ENCODE measurements at regions of chr2 and their contacts with region 1.

Region 1: DNA sequence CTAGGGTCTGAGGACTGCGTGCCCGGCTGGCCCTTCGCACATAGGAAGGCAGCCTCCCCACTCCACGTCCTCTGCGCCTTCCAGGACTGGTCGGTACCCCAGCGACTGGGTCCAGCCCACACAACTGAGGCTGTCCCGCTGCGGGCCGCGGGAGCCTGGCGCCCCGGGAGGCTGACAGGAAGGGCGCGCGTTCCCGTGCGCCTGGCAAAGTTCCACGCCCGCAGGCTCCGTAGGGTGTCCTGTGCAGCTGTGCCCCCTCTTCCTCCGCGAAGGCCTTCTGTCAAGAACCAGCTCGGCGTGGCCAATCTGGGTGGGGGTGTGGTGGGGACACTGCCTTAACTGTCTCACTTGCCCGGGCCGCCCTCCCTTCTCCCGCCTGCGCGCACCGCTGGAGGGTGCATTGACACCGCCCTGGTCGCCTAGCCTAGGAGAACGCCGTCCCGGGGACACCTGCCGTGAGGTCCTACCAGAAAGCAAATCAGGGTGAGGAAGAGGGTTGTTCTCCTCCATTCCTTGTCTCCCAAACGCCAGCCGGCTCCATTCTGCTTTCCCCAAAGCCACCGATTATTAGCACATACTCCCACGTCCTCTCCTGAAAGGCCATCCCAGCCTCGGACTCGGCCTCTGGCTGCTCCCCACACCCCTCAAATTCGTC is 618 bp upstream of the LYPD1 start:
- DNase-seq: peak; percentile 78
- H3K4me3 Mint-ChIP-seq: peak overlapping the region; percentile 85
- H3K27ac Mint-ChIP-seq: peak overlapping the region; percentile 57
- H3K4me1 Mint-ChIP-seq: peaks cover 8% of the 10 kb centered on the region
- H3K27me3 Mint-ChIP-seq: no peaks in the 10 kb centered on the region
- CTCF ChIP-seq: no peak

Region 2: DNA sequence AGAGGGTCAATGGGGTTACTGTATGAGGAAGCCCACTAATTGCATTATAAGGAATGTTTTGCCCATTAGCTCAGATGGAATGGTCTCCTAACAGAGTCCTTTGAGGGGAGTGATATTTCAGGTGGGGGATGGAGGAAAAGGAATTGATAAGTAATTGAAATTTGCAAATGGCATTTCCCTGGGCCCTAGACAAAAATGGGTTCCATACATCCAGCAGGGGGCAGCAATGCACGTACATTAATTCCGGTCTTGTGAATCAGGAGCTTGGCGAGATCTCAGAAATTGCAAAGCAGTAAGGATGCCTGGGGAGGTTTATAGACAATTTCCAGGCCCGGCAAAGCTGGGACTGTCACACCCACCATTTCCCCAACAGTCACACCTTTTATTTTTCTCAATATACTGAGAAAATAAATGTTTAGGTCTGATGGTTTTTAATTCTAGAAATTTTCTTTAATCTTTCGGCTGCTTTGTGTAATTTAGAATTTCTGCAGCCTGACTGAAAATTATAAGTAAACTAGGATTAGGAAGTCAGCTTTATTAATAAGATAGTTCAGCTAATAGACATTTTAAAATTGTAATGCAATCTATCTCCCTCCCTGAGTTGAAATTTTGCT is 123.4 kb before region 1 on chr2:
- CTCF ChIA-PET with region 1: no interaction called
- intact Hi-C with region 1: loop called (anchors 5 kb)
- DNase-seq: peak; percentile 79
- H3K4me3 Mint-ChIP-seq: no peak overlapping the region
- H3K27ac Mint-ChIP-seq: no peak overlapping the region
- H3K4me1 Mint-ChIP-seq: peaks cover 9% of the 10 kb centered on the region
- H3K27me3 Mint-ChIP-seq: no peaks in the 10 kb centered on the region
- CTCF ChIP-seq: peak; percentile 79

Region 3: DNA sequence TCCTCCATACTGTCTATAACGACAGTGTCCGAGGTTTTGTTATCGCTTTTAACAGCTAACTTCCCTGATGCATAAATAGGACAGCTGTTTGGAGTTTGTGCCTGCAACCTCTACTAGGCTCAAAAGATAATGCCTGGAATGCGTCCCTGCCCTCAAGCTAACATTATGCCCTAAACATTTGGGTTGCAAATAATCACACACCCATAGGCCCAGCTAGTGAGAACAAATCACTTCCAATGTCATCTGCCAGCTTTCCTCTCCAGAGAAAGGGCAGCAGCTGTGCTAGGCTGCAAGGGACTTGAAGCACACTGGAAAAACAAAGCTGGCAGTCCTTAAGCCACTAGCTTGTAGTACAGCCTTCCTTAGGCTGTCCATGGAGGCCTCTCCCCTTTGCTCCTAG is 201.2 kb after region 1 on chr2:
- CTCF ChIA-PET with region 1: no interaction called
- intact Hi-C with region 1: loop called (anchors 10 kb)
- DNase-seq: no peak
- H3K4me3 Mint-ChIP-seq: no peak overlapping the region
- H3K27ac Mint-ChIP-seq: no peak overlapping the region
- H3K4me1 Mint-ChIP-seq: peaks cover 21% of the 10 kb centered on the region
- H3K27me3 Mint-ChIP-seq: no peaks in the 10 kb centered on the region
- CTCF ChIP-seq: no peak

Region 4: GRCh38 chr2:133072837-133073694 is 402.4 kb after region 1 on chr2:
- CTCF ChIA-PET with region 1: no interaction called
- intact Hi-C with region 1: loop called (anchors 5 kb)
- DNase-seq: no peak
- H3K4me3 Mint-ChIP-seq: peak overlapping the region; percentile 18
- H3K27ac Mint-ChIP-seq: peak overlapping the region; percentile 8
- H3K4me1 Mint-ChIP-seq: peaks cover 18% of the 10 kb centered on the region
- H3K27me3 Mint-ChIP-seq: no peaks in the 10 kb centered on the region
- CTCF ChIP-seq: no peak

Region 5: DNA sequence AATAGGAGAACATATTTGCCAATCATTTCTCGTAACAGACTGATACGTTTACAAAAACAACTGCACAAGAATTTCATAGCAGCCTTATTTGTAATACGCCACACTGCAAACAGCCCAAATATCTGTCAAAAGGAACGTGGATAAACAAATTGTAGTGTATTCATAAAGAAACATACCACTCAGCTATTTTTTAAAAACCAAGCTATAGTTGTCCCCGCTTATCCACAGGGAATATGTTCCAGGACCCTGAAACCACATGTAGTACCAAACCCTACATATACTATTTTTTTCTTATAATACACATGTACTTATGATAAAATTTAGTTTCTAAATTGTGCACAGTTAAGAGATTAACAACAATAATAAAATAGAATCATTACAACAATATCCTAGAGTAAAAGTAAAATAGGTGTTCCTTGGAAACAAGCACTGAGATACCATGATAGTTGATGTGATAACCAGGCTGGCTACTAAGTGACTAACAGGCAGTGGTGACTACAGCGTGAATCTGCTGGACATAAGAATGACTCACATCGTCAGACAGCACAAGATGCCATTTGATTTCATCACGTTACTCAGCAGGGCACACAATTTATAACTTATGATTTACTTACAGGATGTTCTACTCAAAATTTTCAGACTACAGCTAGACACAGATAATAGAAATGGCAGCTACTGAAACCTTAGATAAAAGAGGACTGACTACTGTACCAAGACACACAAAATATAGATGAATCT is 530.2 kb after region 1 on chr2:
- CTCF ChIA-PET with region 1: no interaction called
- intact Hi-C with region 1: no loop called
- DNase-seq: peak; percentile 22
- H3K4me3 Mint-ChIP-seq: no peak overlapping the region
- H3K27ac Mint-ChIP-seq: peak overlapping the region; percentile 81
- H3K4me1 Mint-ChIP-seq: peaks cover 21% of the 10 kb centered on the region
- H3K27me3 Mint-ChIP-seq: no peaks in the 10 kb centered on the region
- CTCF ChIP-seq: no peak

Region 6: DNA sequence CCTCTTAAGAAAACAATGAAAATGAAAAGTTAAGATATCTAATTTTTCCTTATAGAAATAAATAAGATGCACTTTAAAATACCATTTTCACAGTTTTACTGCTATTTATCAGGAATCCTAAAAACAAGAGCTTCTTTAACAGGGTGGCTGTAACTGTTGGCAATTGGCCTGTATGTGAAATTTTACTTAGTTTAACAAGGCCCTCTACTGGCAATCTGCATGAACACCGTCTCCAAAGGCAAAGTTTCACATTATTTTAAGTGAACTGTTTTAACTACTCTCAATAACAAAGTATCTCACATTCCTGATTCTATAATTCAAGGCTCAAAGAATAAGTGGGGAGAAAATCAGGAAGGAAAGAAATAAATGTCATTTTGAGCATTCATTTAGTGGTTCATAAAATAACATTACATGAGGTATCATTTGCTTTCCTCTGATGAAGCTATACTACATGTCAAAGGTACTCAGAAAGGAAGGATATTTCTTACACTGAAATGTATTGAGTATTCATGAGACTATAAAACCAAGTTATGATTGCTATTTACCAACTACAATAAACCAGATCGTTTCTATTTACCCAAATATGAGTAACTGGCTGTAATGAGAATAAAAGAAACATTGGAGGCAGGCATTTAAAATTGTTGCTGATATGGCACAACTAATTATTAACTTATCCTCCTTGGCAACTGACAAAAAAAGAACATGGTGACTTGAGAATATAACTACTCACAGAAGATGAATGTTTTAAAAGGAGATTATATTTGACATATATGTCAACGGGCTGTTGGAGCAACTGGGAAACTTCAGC is 890.6 kb after region 1 on chr2:
- CTCF ChIA-PET with region 1: no interaction called
- intact Hi-C with region 1: loop called (anchors 10 kb)
- DNase-seq: peak; percentile 15
- H3K4me3 Mint-ChIP-seq: no peak overlapping the region
- H3K27ac Mint-ChIP-seq: no peak overlapping the region
- H3K4me1 Mint-ChIP-seq: no peaks in the 10 kb centered on the region
- H3K27me3 Mint-ChIP-seq: peaks cover 17% of the 10 kb centered on the region
- CTCF ChIP-seq: peak; percentile 51

Measured in Calu3 (cell line).